ENCODE measurements at regions of chr12 and their contacts with region 1.

Region 1: GRCh38 chr12:76763743-76764675 is at the start of gene ZDHHC17:
- DNase-seq: peak; percentile 75 to 92 (median 86)
- H3K4me3 ChIP-seq: peak within 1 kb of the TSS; percentile 66 to 98 (median 87)
- H3K27ac ChIP-seq: peak within 1 kb of the TSS; percentile 81 to 99 (median 95)
- H3K27me3 ChIP-seq: no peaks in the 10 kb centered on the region
- CTCF ChIP-seq: peak in 23 of 56 donors; percentile 2 to 38 (median 14)
- total RNA-seq, gene ZDHHC17: 65.8 to 127 (median 95.1) TPM

Region 2: DNA sequence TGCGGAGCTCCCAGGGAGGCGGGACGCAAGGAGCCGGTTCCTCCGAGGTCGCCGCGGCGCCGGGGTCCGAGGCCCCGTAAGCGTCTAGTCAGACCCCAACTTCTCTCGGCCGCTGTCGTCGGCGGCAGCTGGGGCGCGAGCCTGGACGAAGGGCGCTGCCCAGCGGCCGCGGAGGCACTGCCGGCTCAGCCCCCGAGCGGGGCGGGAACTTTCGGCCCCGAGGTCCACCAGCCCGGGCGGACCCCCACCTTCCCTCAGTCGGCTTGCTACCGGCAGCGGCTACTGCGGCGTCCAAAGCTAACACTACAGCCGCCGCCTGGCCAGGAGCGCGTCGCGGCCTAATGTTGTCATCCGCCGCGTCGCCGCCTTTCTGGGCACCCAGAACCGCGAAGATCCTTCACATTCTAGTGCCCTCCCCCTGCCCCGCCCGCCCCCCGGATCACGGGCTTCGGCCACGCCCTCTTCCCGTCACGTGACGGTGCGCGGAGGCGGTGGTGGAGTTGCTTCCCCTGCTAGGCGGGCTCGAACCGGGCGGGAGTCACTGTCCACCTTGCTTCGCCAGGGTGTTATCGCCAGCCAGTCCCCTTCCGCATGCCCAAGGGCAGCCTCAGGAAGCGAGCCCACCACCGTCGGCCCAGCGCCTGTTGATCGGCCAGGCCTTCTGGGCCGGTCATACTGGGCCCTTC is 204.5 kb before region 1 on chr12 and contains the start of gene OSBPL8:
- intact Hi-C with region 1: loop called (anchors 5 to 10 kb)
- DNase-seq: peak; percentile 92 to 98 (median 96)
- H3K4me3 ChIP-seq: peak within 1 kb of the TSS; percentile 68 to 99 (median 92)
- H3K27ac ChIP-seq: peak within 1 kb of the TSS; percentile 78 to 99 (median 95)
- H3K27me3 ChIP-seq: no peaks in the 10 kb centered on the region
- CTCF ChIP-seq: peak in 50 of 56 donors; percentile 8 to 67 (median 50)
- total RNA-seq, gene OSBPL8: 57.8 to 129 (median 93.5) TPM

Measured in dorsolateral prefrontal cortex (tissue), 120 donors.